Dendritic cell treated with granulocyte-macrophage colony-stimulating factor and Interleukin-4, amounts not matched to agents 40 ng/mL and 50 ng/mL, for 4 days (primary cell): ENCODE measurements at regions of chr4 and their contacts with region 1.

Region 1: GRCh38 chr4:105146276-105147015 is at the start of gene TET2:
- H3K4me3 Mint-ChIP-seq: peak within 1 kb of the TSS; percentile 89
- H3K27ac Mint-ChIP-seq: peak within 1 kb of the TSS; percentile 100
- H3K4me1 Mint-ChIP-seq: peaks cover 54% of the 10 kb centered on the region
- H3K27me3 Mint-ChIP-seq: no peaks in the 10 kb centered on the region

Region 2: DNA sequence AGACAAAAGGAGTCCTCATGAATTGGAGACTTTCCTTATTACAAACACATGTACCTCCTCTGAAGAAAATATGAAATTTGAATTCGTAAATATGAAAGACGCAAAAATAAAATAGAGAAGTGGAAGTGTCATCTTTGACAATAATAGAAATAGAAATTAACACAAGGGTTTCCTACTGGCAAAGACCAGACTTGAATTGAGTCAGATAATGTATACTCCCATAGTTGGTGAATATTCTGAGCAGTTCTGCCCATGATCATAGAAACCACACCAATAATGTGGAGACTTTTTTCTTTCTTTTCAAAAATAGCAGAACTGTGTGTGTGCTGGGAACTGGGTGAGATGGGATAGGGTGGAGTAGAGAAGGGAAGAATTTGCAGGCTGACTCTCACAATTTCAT is 277.5 kb before region 1 on chr4:
- intact Hi-C with region 1: no loop called
- H3K4me3 Mint-ChIP-seq: peak overlapping the region; percentile 6
- H3K27ac Mint-ChIP-seq: peak overlapping the region; percentile 69
- H3K4me1 Mint-ChIP-seq: peaks cover 25% of the 10 kb centered on the region
- H3K27me3 Mint-ChIP-seq: no peaks in the 10 kb centered on the region

Region 3: DNA sequence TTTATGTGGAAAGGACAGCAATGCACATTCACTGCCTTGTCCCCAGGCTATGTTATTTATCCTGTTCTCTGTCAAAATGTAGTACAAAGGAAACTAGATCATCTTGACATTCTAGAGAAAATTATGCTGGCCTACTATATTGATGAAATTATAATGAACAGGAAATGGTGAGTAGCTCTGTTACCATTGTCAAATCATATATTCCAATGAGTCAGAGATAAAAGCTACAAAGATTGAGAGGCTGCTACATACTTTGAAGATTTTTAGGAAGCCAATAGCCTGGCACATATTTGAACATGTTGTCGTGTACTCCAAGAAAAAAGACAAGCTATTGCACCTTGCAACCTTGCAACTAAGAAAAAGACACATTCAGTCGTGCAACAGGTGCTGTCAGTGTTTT is 52.5 kb before region 1 on chr4:
- intact Hi-C with region 1: no loop called
- H3K4me3 Mint-ChIP-seq: no peak overlapping the region
- H3K27ac Mint-ChIP-seq: no peak overlapping the region
- H3K4me1 Mint-ChIP-seq: peaks cover 6% of the 10 kb centered on the region
- H3K27me3 Mint-ChIP-seq: no peaks in the 10 kb centered on the region

Region 4: DNA sequence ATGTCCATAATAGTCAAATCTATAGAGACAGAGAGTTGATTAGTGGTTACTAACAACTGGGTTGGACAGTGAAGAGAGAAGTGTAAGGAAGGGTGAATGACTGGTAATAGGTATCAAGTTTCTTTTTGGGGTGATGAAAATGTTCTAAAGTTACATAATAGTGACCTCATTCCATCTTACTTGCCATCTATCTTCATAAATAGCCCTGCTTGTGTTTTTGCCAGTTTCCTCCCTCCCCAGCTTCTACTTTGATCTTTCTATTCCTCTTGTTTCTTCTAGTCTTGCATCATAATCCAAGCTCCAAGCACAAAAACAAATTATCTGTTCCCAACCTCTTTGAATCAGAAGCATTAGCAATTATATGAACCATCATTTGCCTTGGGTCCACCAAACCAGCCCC is 40.0 kb before region 1 on chr4:
- intact Hi-C with region 1: loop called (anchors 2 kb)
- H3K4me3 Mint-ChIP-seq: no peak overlapping the region
- H3K27ac Mint-ChIP-seq: peak overlapping the region; percentile 89
- H3K4me1 Mint-ChIP-seq: peaks cover 23% of the 10 kb centered on the region
- H3K27me3 Mint-ChIP-seq: no peaks in the 10 kb centered on the region

Region 5: DNA sequence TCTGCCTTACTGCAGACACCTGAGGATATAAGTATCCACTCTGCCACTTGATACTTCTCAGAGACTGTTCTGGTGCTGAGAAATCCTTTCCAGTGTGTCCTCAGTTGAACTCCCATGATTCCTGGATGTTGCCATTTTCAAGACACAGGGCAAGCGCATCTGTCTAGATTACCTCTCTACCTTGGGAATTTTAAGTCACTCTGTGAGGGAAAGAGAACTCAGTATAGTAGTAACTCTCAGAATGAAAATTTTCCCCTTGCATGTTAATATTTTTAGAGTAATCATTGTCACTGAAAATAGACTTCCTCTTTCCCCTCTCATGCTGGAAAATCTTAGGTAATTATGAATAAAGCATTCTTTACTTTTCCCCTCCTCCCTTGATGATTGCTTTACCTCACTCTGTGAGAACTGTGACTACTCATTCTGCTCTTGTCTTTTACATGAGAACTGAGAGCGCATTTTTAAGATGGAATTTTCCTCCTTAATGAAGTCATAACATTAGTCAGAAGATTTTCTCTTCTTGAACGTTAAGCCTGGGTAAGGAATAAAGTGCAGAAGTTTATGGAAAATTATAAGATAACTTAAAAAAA is 45.3 kb after region 1 on chr4:
- intact Hi-C with region 1: loop called (anchors 5 kb)
- H3K4me3 Mint-ChIP-seq: no peak overlapping the region
- H3K27ac Mint-ChIP-seq: peak overlapping the region; percentile 63
- H3K4me1 Mint-ChIP-seq: peaks cover 70% of the 10 kb centered on the region
- H3K27me3 Mint-ChIP-seq: no peaks in the 10 kb centered on the region

Region 6: GRCh38 chr4:105215609-105216313 is 69.3 kb after region 1 on chr4:
- intact Hi-C with region 1: no loop called
- H3K4me3 Mint-ChIP-seq: no peak overlapping the region
- H3K27ac Mint-ChIP-seq: peak overlapping the region; percentile 41
- H3K4me1 Mint-ChIP-seq: peaks cover 39% of the 10 kb centered on the region
- H3K27me3 Mint-ChIP-seq: no peaks in the 10 kb centered on the region